HCT116 (cell line): ENCODE measurements at regions of chr1 and their contacts with region 1.

Region 1: GRCh38 chr1:13662493-13662892 is 37.5 kb upstream of the PRDM2 start:
- DNase-seq: no peak
- ATAC-seq: no peak
- H3K4me3 ChIP-seq: no peak overlapping the region
- H3K27ac ChIP-seq: no peak overlapping the region
- H3K4me1 ChIP-seq: no peaks in the 10 kb centered on the region
- H3K27me3 ChIP-seq: no peaks in the 10 kb centered on the region
- CTCF ChIP-seq: no peak
- POLR2A ChIP-seq: no peak
- RAD21 ChIP-seq: no peak

Region 2: GRCh38 chr1:13725714-13726175 is 63.3 kb after region 1 on chr1:
- CTCF ChIA-PET with region 1: no interaction called
- POLR2A ChIA-PET with region 1: no interaction called
- RAD21 ChIA-PET with region 1: no interaction called
- intact Hi-C with region 1: loop called (anchors 1 kb)
- DNase-seq: peak; percentile 23
- ATAC-seq: peak; percentile 90
- H3K4me3 ChIP-seq: no peak overlapping the region
- H3K27ac ChIP-seq: no peak overlapping the region
- H3K4me1 ChIP-seq: no peaks in the 10 kb centered on the region
- H3K27me3 ChIP-seq: no peaks in the 10 kb centered on the region
- CTCF ChIP-seq: peak; percentile 46 to 64 (median 62); a peak in 5 of 6 replicates
- POLR2A ChIP-seq: no peak
- RAD21 ChIP-seq: peak; percentile 45

Region 3: GRCh38 chr1:13807213-13807612 is 144.7 kb after region 1 on chr1:
- CTCF ChIA-PET with region 1: no interaction called
- POLR2A ChIA-PET with region 1: no interaction called
- RAD21 ChIA-PET with region 1: no interaction called
- intact Hi-C with region 1: loop called (anchors 1 kb)
- DNase-seq: peak; percentile 12
- ATAC-seq: peak; percentile 83
- H3K4me3 ChIP-seq: no peak overlapping the region
- H3K27ac ChIP-seq: no peak overlapping the region
- H3K4me1 ChIP-seq: peaks cover 0 to 5% of the 10 kb centered on the region in 2 experiments; a peak in 2 of 4 replicates
- H3K27me3 ChIP-seq: no peaks in the 10 kb centered on the region
- CTCF ChIP-seq: peak; percentile 68 to 72 (median 72)
- POLR2A ChIP-seq: no peak
- RAD21 ChIP-seq: peak; percentile 66

Region 4: GRCh38 chr1:13813398-13814012 is 151.0 kb after region 1 on chr1:
- CTCF ChIA-PET with region 1: interaction called, 3 read pairs
- POLR2A ChIA-PET with region 1: no interaction called
- RAD21 ChIA-PET with region 1: no interaction called
- intact Hi-C with region 1: loop called (anchors 1 kb)
- DNase-seq: no peak
- ATAC-seq: peak; percentile 79
- H3K4me3 ChIP-seq: 0 out of 4 replicates have a peak overlapping the region, but pooled peaks of 1 of the 2 experiments have one; percentile 20
- H3K27ac ChIP-seq: no peak overlapping the region
- H3K4me1 ChIP-seq: peaks cover 3 to 16% of the 10 kb centered on the region in 2 experiments; a peak in 2 of 4 replicates
- H3K27me3 ChIP-seq: no peaks in the 10 kb centered on the region
- CTCF ChIP-seq: peak; percentile 54 to 93 (median 93); a peak in 5 of 6 replicates
- POLR2A ChIP-seq: no peak
- RAD21 ChIP-seq: peak; percentile 58

Region 5: DNA sequence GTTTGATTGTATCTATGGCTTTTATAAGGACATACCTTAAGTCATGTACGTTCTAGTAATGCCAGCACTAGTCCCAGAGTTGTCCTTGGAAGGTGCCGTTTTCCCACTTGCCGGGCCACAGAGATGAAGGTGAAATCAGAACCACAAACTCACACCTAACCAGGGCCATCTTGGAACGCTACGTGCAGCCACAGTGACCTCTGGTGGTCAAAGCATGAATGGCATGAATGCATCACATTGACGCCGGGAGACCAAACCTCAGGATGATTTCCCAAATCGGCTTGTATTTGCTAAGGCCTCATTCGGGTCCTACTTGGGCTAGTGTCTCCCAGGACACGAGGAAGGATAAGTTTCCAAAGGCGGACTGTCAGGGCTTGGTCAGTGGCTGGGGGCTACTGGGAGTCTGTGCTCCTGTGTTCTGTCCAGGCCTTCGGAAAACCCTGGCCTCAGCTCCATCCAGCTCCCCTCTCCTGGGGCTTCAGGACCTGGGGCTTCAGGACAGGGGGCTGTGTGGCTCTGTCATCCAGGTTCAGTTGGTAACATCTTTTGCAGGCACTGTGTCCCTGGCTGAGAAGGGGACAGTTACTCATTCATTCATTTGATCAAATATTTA is 298.0 kb after region 1 on chr1:
- CTCF ChIA-PET with region 1: no interaction called
- POLR2A ChIA-PET with region 1: no interaction called
- RAD21 ChIA-PET with region 1: no interaction called
- intact Hi-C with region 1: loop called (anchors 1 kb)
- DNase-seq: peak; percentile 44
- ATAC-seq: peak; percentile 93
- H3K4me3 ChIP-seq: no peak overlapping the region
- H3K27ac ChIP-seq: no peak overlapping the region
- H3K4me1 ChIP-seq: no peaks in the 10 kb centered on the region
- H3K27me3 ChIP-seq: peaks cover 12% of the 10 kb centered on the region; the same call in 1 of the 2 replicates
- CTCF ChIP-seq: peak; percentile 85 to 97 (median 95)
- POLR2A ChIP-seq: no peak
- RAD21 ChIP-seq: peak; percentile 93